ENCODE measurements at regions of chr12 and their contacts with region 1.

Region 1: GRCh38 chr12:48758221-48758620 is 30.7 kb downstream of the ADCY6 start:
- DNase-seq: no peak
- ATAC-seq: no peak
- H3K4me3 ChIP-seq: no peak overlapping the region
- H3K4me3 Mint-ChIP-seq: no peak overlapping the region
- H3K27ac ChIP-seq: no peak overlapping the region
- H3K27ac Mint-ChIP-seq: no peak overlapping the region
- H3K4me1 ChIP-seq: no peaks in the 10 kb centered on the region
- H3K4me1 Mint-ChIP-seq: no peaks in the 10 kb centered on the region
- H3K27me3 ChIP-seq: no peaks in the 10 kb centered on the region
- H3K27me3 Mint-ChIP-seq: no peaks in the 10 kb centered on the region

Region 2: GRCh38 chr12:48736456-48736855 is 21.8 kb before region 1 on chr12:
- CTCF ChIA-PET with region 1: interaction called in 1 of 2 experiments, 12 read pairs
- POLR2A ChIA-PET with region 1: no interaction called
- DNase-seq: no peak
- ATAC-seq: no peak
- H3K4me3 ChIP-seq: no peak overlapping the region
- H3K4me3 Mint-ChIP-seq: no peak overlapping the region
- H3K27ac ChIP-seq: no peak overlapping the region
- H3K27ac Mint-ChIP-seq: no peak overlapping the region
- H3K4me1 ChIP-seq: no peaks in the 10 kb centered on the region
- H3K4me1 Mint-ChIP-seq: no peaks in the 10 kb centered on the region
- H3K27me3 ChIP-seq: peaks cover 2 to 12% of the 10 kb centered on the region in 2 experiments
- H3K27me3 Mint-ChIP-seq: peaks cover 16 to 18% of the 10 kb centered on the region in 2 donors